Activated B cell treated with CpG ODN at 0.5 μM for 24 hours (primary cell): ENCODE measurements at regions of chr10 and their contacts with region 1.

Region 1: GRCh38 chr10:74151056-74151878 is at the start of gene ADK:
- DNase-seq: peak; percentile 99
- ATAC-seq: peak; percentile 96
- H3K4me3 Mint-ChIP-seq: no peak within 1 kb of the TSS
- H3K27ac Mint-ChIP-seq: no peak within 1 kb of the TSS
- H3K4me1 Mint-ChIP-seq: peaks cover 61% of the 10 kb centered on the region
- H3K27me3 Mint-ChIP-seq: no peaks in the 10 kb centered on the region
- CTCF ChIP-seq: no peak
- total RNA-seq, gene ADK: 46.1 and 47.5 TPM in 2 replicates

Region 2: DNA sequence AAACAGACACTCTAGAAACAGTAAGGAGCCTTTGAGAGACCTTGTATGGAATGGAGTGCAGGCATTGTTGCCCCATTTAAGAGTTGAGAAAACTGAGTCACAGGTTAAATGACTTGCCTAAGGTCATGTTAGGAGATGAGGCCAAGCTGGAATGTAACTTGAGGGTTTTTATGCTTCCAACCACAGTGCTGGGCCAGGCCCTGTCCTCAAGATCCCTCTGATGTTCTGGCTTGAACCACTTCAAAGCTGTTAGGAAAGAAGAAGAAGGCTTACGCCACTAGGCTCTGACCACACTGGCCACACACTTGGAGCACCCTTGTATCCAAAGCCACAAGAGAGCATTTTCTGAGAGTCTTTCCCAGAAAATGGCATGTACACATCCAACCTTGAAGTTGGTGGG is 197.6 kb before region 1 on chr10:
- CTCF ChIA-PET with region 1: no interaction called
- POLR2A ChIA-PET with region 1: no interaction called
- intact Hi-C with region 1: no loop called
- DNase-seq: no peak
- ATAC-seq: no peak
- H3K4me3 Mint-ChIP-seq: no peak overlapping the region
- H3K27ac Mint-ChIP-seq: peak overlapping the region; percentile 10
- H3K4me1 Mint-ChIP-seq: peaks cover 30% of the 10 kb centered on the region
- H3K27me3 Mint-ChIP-seq: no peaks in the 10 kb centered on the region
- CTCF ChIP-seq: no peak

Region 3: DNA sequence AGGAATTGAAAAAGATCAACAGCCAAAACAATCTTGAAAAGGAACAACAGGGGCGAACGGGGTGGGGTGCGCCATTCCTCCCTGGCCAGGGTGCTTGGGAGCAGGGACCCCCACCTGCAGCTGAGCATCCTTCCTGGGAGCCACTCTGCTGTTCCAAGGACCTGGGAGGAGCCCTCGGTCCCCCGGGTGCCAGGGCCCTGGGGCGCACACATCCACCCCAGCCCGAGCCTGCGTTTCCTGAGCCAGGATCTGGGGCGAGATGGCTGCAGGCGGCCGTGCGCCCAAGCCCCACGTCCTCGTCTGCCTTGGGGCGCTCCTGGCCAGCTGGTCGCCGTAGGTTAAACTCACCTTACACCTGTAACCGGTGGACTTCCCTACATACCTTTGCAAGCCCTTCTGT is 11.3 kb before region 1 on chr10:
- CTCF ChIA-PET with region 1: interaction called, 3 read pairs
- POLR2A ChIA-PET with region 1: interaction called, 3 read pairs
- intact Hi-C with region 1: loop called (anchors 1 kb)
- DNase-seq: no peak
- ATAC-seq: no peak
- H3K4me3 Mint-ChIP-seq: no peak overlapping the region
- H3K27ac Mint-ChIP-seq: no peak overlapping the region
- H3K4me1 Mint-ChIP-seq: peaks cover 7% of the 10 kb centered on the region
- H3K27me3 Mint-ChIP-seq: no peaks in the 10 kb centered on the region
- CTCF ChIP-seq: no peak

Region 4: DNA sequence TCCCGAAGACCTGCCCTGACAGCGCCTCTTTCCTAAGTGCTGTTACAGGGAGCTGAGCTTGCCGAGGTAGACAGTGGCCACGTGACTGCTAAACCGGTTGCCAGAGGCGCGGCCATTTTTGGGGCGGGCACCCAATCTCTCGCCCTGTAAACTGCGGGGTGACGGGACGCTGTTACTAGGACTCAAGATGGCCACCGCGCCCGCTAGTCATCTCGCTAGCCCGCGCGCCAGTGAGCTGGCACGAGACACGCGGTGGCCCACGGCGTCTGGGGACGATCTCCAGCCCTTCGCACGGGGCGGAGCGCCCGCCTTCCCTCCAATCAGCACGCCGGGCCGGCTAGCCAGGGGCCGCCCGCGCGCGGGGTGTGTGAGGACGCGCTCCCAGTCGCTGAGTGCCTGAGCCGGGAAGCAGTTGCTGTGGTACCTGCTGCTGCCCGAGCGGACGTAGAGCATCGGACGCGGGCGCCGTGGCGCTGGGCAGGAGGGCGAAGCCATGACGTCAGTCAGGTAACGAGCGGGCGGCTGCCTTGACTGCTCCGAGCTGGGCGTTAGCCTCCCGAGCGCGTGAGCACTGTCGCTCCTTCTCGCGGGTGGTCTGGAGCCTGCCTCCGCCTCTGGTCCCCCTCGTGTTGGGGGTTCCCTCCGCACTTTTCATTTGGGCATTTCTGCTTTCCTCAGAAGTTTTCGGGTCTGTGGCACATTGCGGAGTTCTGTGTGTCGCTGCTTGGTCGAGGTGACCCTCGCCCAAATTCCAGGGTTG is 25.3 kb after region 1 on chr10:
- CTCF ChIA-PET with region 1: interaction called, 7 read pairs
- POLR2A ChIA-PET with region 1: interaction called, 57 read pairs
- intact Hi-C with region 1: loop called (anchors 1 kb)
- DNase-seq: peak; percentile 92
- ATAC-seq: peak; percentile 90
- H3K4me3 Mint-ChIP-seq: peak overlapping the region; percentile 92
- H3K27ac Mint-ChIP-seq: peak overlapping the region; percentile 97
- H3K4me1 Mint-ChIP-seq: peaks cover 55% of the 10 kb centered on the region
- H3K27me3 Mint-ChIP-seq: no peaks in the 10 kb centered on the region
- CTCF ChIP-seq: no peak

Region 5: GRCh38 chr10:74213571-74214162 is 62.4 kb after region 1 on chr10:
- CTCF ChIA-PET with region 1: interaction called, 22 read pairs
- POLR2A ChIA-PET with region 1: interaction called, 27 read pairs
- intact Hi-C with region 1: loop called (anchors 1 kb)
- DNase-seq: no peak
- ATAC-seq: peak; percentile 77
- H3K4me3 Mint-ChIP-seq: no peak overlapping the region
- H3K27ac Mint-ChIP-seq: peak overlapping the region; percentile 67
- H3K4me1 Mint-ChIP-seq: peaks cover 31% of the 10 kb centered on the region
- H3K27me3 Mint-ChIP-seq: no peaks in the 10 kb centered on the region
- CTCF ChIP-seq: no peak

Region 6: DNA sequence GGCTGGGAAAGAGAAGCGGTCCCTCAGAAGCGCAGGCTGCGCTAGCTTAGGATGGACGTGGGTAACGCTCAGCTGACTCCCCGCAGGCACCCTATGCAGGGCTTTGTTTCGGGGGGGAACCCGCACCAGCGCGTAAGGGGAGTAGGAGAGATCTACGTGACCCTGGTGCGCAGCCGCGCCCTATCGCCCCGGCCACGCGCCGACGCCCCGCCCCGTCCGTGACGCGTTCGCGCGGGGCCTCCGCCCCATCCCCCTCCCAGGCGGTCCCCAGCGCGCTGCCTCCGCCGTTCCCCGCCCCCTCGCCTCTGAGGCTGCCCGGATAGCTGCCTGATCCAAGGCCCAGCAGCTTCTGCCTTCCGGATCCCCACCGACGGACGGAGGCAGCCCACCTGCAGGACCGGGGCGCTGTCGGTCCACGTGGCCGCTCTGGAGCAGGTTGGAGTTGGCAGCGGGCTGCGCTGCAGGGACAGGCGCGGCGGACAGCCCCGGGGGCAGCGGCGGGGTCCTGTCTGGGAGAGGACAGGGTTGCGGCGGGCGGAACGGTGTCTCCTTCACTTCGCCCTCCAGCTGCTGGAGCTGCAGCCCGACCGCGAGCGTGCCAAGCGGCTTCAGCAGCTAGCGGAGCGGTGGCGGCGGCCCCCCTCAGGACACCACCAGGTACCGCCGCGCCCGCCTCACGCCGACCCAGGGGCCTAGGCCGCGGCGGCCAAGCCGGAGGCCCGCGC is 1059.2 kb after region 1 on chr10 and contains the start of gene VDAC2:
- CTCF ChIA-PET with region 1: no interaction called
- POLR2A ChIA-PET with region 1: interaction called, 10 read pairs
- intact Hi-C with region 1: loop called (anchors 1 kb)
- DNase-seq: peak; percentile 98
- ATAC-seq: peak; percentile 89
- H3K4me3 Mint-ChIP-seq: peak within 1 kb of the TSS; percentile 99
- H3K27ac Mint-ChIP-seq: peak within 1 kb of the TSS; percentile 100
- H3K4me1 Mint-ChIP-seq: peaks cover 27% of the 10 kb centered on the region
- H3K27me3 Mint-ChIP-seq: no peaks in the 10 kb centered on the region
- CTCF ChIP-seq: no peak
- total RNA-seq, gene VDAC2: 99.0 and 104 TPM in 2 replicates